Heart left ventricle (tissue), 16 donors: ENCODE measurements at regions of chr7 and their contacts with region 1.

Region 1: DNA sequence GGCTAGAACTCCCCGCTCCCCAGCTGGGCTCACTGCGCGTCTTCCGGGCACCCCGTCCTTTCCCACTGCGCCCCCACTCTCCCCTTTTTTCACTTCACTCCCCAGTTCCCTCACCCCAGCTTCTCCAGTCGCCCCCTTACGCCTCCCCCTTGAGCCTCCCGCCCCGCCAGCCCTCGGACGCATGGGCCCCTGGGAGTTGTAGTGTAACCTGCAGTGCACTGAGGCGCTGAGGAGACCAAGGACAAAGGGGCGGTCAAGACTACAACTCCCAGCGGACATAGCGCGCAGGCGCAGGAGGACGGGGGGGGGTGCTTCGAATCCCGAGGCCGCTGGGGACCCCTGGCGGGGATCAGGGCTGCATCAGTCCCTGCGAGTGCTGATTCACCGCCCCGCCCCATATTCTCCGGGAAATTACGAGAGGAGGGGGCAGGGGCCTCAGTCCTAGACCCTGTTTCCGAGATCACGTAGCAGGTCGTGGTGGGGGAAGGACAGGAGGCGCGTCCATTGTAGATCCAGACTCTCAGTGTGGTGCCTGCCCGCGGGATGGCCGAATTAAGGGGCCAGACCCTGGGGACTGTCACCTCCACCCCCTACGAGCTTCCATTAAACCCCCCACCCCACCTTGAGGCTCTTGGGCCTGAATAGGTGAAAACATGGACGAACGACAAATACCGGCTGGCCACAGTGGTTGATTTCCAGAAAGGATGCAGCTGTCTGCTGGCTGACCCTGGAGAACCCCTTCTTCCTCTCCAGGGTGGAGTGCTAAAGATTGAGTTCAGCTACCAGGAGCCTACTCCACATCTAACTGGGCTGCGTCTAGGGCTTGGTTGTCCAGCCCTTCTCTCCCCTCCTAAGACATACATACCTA is 554 bp upstream of the YWHAG start:
- DNase-seq: peak; percentile 98 to 100 (median 99)
- ATAC-seq: peak; percentile 93 to 98 (median 96)
- H3K4me3 ChIP-seq: peak overlapping the region; percentile 67 to 100 (median 98)
- H3K27ac ChIP-seq: peak overlapping the region; percentile 93 to 100 (median 99)
- H3K4me1 ChIP-seq: peaks cover 10 to 56% (median 43%) of the 10 kb centered on the region in 12 donors
- H3K27me3 ChIP-seq: no peaks in the 10 kb centered on the region
- CTCF ChIP-seq: peak; percentile 58 to 94 (median 72)
- POLR2A ChIP-seq: no peak

Region 2: DNA sequence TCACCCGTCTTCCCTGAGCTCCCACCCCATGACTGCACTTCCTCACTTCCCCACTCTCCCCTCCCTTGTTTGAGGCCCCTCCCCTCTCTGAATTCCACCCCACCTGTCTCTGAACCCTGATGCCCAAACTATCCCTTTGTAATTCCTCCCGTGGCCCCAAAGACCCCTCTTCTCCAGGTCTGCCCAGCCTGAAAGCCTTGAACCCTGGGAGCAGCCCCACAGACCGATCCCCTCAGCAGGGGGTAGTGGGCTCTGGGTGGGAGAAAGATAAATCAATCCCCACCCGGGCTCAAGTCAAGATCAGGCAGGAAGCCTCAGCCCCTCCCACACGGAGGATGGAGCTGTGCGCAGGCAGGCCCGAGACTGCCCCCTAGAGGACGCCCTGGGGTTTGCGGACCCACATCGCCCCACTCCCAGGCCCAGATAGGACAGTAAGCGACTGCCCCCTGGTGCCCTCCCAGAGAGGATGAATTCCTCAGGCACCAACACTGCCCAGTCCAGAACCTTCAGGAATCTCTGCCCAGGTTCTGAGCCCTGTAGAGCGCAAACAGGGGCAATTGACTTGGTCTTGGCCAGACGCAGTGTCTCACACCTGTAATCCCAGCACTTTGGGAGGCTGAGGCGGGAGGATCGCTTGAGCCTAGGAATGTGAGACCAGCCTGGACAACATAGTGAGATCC is 45.2 kb before region 1 on chr7:
- intact Hi-C with region 1: loop called in 7 of 10 experiments (anchors 1 to 5 kb)
- DNase-seq: peak; percentile 96 to 98 (median 96)
- ATAC-seq: peak; percentile 48 to 75 (median 66)
- H3K4me3 ChIP-seq: no peak overlapping the region
- H3K27ac ChIP-seq: peak overlapping the region in 3 of 12 donors; percentile 43 to 47 (median 46)
- H3K4me1 ChIP-seq: peaks cover 0 to 29% (median 15%) of the 10 kb centered on the region in 12 donors
- H3K27me3 ChIP-seq: no peaks in the 10 kb centered on the region
- CTCF ChIP-seq: peak; percentile 99 to 100 (median 100)
- POLR2A ChIP-seq: peak in 1 of 2 donors; percentile 49

Region 3: DNA sequence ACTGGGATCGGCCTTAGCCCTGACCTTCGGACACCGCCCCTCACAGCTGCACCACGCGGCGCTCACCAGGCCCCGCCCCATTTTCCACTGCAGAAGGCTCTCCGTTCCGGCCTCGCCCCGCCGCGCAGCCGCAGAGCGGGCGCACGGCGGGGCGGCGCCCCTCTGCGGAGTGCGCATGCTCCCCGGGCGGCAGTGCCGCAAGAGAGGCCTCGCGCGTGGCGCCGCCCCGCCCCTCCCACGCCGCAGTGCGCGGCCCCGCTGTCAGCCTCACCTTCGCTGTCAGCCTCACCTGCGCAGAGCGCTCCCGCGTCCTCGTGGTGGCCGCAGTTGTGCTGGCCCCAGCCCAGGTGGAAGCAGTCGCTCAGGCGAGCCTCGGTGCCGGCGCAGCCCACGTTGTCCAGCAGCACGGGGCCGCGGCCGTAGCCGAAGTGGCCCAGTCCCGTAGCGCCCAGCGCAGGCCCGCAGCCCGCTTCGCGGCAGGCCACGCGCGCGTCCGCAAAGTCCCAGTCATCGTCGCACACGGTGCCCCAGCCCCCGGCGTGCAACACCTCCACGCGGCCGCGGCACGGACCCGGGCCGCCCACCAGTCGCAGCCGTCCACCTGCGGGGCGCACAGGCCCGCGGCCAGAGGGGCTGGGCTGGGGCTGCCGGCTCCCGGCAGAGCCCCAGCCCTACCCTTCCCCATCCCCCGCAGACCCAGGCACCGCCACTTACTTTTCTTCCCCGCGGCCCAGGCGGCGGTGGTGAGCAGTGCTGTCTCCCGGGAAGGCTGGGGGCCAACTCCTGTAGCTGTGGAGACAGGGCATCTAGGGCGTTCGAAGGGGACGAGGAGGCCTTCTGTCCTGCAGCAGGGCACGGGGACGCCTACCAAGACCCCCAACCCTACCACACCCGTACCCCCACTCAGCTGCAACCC is 34.0 kb after region 1 on chr7:
- intact Hi-C with region 1: loop called in 1 of 10 experiments (anchors 5 kb)
- DNase-seq: peak; percentile 96 to 97 (median 97)
- ATAC-seq: peak; percentile 90 to 95 (median 94)
- H3K4me3 ChIP-seq: peak overlapping the region; percentile 20 to 81 (median 71)
- H3K27ac ChIP-seq: peak overlapping the region; percentile 72 to 95 (median 88)
- H3K4me1 ChIP-seq: peaks cover 0 to 44% (median 20%) of the 10 kb centered on the region in 12 donors
- H3K27me3 ChIP-seq: no peaks in the 10 kb centered on the region
- CTCF ChIP-seq: peak in 1 of 12 donors; percentile 22
- POLR2A ChIP-seq: peak in 1 of 2 donors; percentile 91